ENCODE measurements at regions of chr2 and their contacts with region 1.

Region 1: GRCh38 chr2:177332041-177332991 is 60.3 kb upstream of the AGPS start:
- DNase-seq: no peak
- H3K4me3 ChIP-seq: peak overlapping the region in 1 of 4 experiments; percentile 31; a peak in 1 of 8 replicates
- H3K27ac ChIP-seq: no peak overlapping the region
- H3K4me1 ChIP-seq: peaks cover 0 to 7% (median 3%) of the 10 kb centered on the region in 4 experiments; a peak in 3 of 7 replicates
- H3K27me3 ChIP-seq: no peaks in the 10 kb centered on the region
- CTCF ChIP-seq: peak in 2 of 3 experiments; percentile 62 to 70; a peak in 3 of 4 replicates
- EP300 ChIP-seq: peak in 1 of 2 experiments; percentile 63; a peak in 1 of 3 replicates
- POLR2A ChIP-seq: no peak
- RAD21 ChIP-seq: peak; percentile 82 to 83

Region 2: DNA sequence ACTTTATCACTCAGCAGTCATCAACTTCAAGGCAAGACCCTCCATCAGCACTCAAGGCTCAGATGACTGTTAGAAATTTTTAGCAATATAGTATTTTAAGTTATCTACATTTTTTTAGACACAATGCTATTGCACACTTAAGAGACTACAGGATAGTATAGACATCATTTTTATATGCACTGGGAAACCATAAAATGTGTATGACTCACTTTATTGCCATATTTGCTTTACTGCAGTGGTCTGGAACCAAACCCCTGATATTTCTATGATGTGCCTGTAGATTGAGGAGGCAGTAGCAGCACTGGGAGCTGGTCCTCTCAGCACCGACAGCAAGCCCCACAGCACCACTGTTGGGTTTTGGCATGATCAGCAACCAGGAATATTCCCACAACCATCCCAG is 384.6 kb before region 1 on chr2:
- CTCF ChIA-PET with region 1: no interaction called
- POLR2A ChIA-PET with region 1: no interaction called
- DNase-seq: no peak
- H3K4me3 ChIP-seq: no peak overlapping the region
- H3K27ac ChIP-seq: no peak overlapping the region
- H3K4me1 ChIP-seq: no peaks in the 10 kb centered on the region
- H3K27me3 ChIP-seq: peaks cover 0 to 2% (median 0%) of the 10 kb centered on the region in 4 experiments; a peak in 1 of 7 replicates
- CTCF ChIP-seq: no peak
- EP300 ChIP-seq: no peak
- POLR2A ChIP-seq: no peak
- RAD21 ChIP-seq: no peak

Region 3: DNA sequence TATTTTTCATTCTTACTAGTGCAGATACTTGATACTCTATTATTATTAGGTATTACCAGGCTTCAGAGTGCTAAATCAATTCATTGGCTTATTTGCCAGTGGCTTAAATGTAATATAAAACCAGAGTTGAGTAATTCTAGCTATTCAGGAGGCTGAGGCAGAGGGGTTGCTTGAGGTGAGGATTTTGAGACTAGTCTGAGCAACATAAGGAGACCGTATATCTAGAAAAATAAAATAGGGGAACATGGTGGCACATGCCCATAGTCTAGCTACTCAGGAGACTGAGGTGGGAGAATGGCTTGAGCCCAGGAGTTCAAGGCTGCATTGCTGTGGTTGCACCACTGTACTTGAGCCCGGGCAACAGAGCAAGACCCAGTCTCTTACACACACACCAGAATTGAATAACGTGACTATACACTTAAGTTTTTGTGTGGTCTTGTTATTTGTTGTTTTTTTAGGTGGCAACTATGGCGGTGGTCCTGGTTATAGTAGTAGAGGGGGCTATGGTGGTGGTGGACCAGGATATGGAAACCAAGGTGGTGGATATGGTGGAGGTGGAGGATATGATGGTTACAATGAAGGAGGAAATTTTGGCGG is 115.0 kb before region 1 on chr2:
- CTCF ChIA-PET with region 1: no interaction called
- POLR2A ChIA-PET with region 1: no interaction called
- DNase-seq: no peak
- H3K4me3 ChIP-seq: no peak overlapping the region
- H3K27ac ChIP-seq: no peak overlapping the region
- H3K4me1 ChIP-seq: peaks cover 0 to 2% (median under 1%) of the 10 kb centered on the region in 4 experiments; a peak in 1 of 7 replicates
- H3K27me3 ChIP-seq: no peaks in the 10 kb centered on the region
- CTCF ChIP-seq: no peak
- EP300 ChIP-seq: no peak
- POLR2A ChIP-seq: peak in 1 of 2 experiments; percentile 57; a peak in 2 of 3 replicates
- RAD21 ChIP-seq: no peak

Region 4: GRCh38 chr2:177263451-177264208 is 68.7 kb before region 1 on chr2:
- CTCF ChIA-PET with region 1: interaction called, 17 read pairs
- POLR2A ChIA-PET with region 1: interaction called, 12 read pairs
- DNase-seq: peak; percentile 44 to 88
- H3K4me3 ChIP-seq: peak overlapping the region; percentile 71 to 82 (median 78)
- H3K27ac ChIP-seq: peak overlapping the region; percentile 78; the same call in 1 of the 2 replicates
- H3K4me1 ChIP-seq: peaks cover 0 to 2% (median 2%) of the 10 kb centered on the region in 4 experiments; a peak in 3 of 7 replicates
- H3K27me3 ChIP-seq: no peaks in the 10 kb centered on the region
- CTCF ChIP-seq: peak; percentile 47 to 57 (median 50); a peak in 3 of 4 replicates
- EP300 ChIP-seq: no peak; a peak in 1 of 3 replicates
- POLR2A ChIP-seq: peak; percentile 34 to 73
- RAD21 ChIP-seq: peak; percentile 31 to 55

Region 5: GRCh38 chr2:177281400-177282180 is 50.7 kb before region 1 on chr2:
- CTCF ChIA-PET with region 1: interaction called, 10 read pairs
- POLR2A ChIA-PET with region 1: no interaction called
- DNase-seq: no peak
- H3K4me3 ChIP-seq: no peak overlapping the region; a peak in 1 of 8 replicates
- H3K27ac ChIP-seq: no peak overlapping the region
- H3K4me1 ChIP-seq: no peaks in the 10 kb centered on the region
- H3K27me3 ChIP-seq: no peaks in the 10 kb centered on the region
- CTCF ChIP-seq: no peak
- EP300 ChIP-seq: no peak
- POLR2A ChIP-seq: no peak
- RAD21 ChIP-seq: no peak

Region 6: GRCh38 chr2:177355874-177356273 is 23.6 kb after region 1 on chr2:
- CTCF ChIA-PET with region 1: interaction called, 13 read pairs
- POLR2A ChIA-PET with region 1: interaction called, 3 read pairs
- DNase-seq: no peak
- H3K4me3 ChIP-seq: no peak overlapping the region
- H3K27ac ChIP-seq: no peak overlapping the region
- H3K4me1 ChIP-seq: no peaks in the 10 kb centered on the region
- H3K27me3 ChIP-seq: no peaks in the 10 kb centered on the region
- CTCF ChIP-seq: no peak
- EP300 ChIP-seq: no peak
- POLR2A ChIP-seq: no peak
- RAD21 ChIP-seq: no peak

Region 7: GRCh38 chr2:177399376-177399775 is 67.1 kb after region 1 on chr2:
- CTCF ChIA-PET with region 1: no interaction called
- POLR2A ChIA-PET with region 1: no interaction called
- DNase-seq: no peak
- H3K4me3 ChIP-seq: no peak overlapping the region
- H3K27ac ChIP-seq: no peak overlapping the region
- H3K4me1 ChIP-seq: peaks cover 0 to 2% (median 0%) of the 10 kb centered on the region in 4 experiments; a peak in 1 of 7 replicates
- H3K27me3 ChIP-seq: no peaks in the 10 kb centered on the region
- CTCF ChIP-seq: no peak
- EP300 ChIP-seq: no peak
- POLR2A ChIP-seq: no peak
- RAD21 ChIP-seq: no peak

Region 8: DNA sequence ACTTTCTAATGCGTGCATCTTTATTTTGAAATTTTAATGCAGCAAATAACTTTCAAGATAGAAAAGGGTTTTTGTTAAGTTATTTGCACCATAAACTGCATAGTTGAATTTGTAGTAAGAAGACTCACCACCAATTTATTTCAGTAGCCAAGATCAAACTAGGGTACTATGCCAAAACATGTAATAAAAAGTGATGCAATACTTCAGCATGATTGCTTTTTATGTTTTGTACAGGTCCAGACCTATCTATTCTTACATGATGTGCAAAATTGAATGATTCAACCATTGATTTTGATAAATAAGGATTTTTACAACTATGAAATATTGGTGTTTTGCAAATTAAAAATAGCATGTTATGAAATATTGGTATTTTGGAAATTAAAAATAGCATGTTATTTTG is 87.0 kb after region 1 on chr2:
- CTCF ChIA-PET with region 1: interaction called, 88 read pairs
- POLR2A ChIA-PET with region 1: no interaction called
- DNase-seq: no peak
- H3K4me3 ChIP-seq: no peak overlapping the region
- H3K27ac ChIP-seq: no peak overlapping the region
- H3K4me1 ChIP-seq: no peaks in the 10 kb centered on the region
- H3K27me3 ChIP-seq: no peaks in the 10 kb centered on the region
- CTCF ChIP-seq: no peak
- EP300 ChIP-seq: no peak
- POLR2A ChIP-seq: no peak
- RAD21 ChIP-seq: no peak

Region 9: GRCh38 chr2:177763532-177764265 is 431.4 kb after region 1 on chr2:
- CTCF ChIA-PET with region 1: interaction called, 11 read pairs
- POLR2A ChIA-PET with region 1: no interaction called
- DNase-seq: peak; percentile 31 to 93
- H3K4me3 ChIP-seq: peak overlapping the region; percentile 15 to 51 (median 27); a peak in 7 of 8 replicates
- H3K27ac ChIP-seq: no peak overlapping the region
- H3K4me1 ChIP-seq: peaks cover 0 to 6% (median under 1%) of the 10 kb centered on the region in 4 experiments; a peak in 5 of 7 replicates
- H3K27me3 ChIP-seq: peaks cover 0 to 2% (median 1%) of the 10 kb centered on the region in 4 experiments; a peak in 2 of 7 replicates
- CTCF ChIP-seq: peak; percentile 74 to 93 (median 78)
- EP300 ChIP-seq: no peak
- POLR2A ChIP-seq: no peak
- RAD21 ChIP-seq: peak; percentile 43 to 65